Activated T-helper 2 cell treated with anti-CD3 and anti-CD28 coated beads, Interferon-gamma antibody, Interleukin-2, Interleukin-4, amounts not matched to agents 10 μg/mL and 5 μg/mL and 100 μg/mL, durations not matched to agents 14 hours and 24 hours and 36 hours (primary cell): ENCODE measurements at regions of chr6 and their contacts with region 1.

Region 1: GRCh38 chr6:45584127-45584526 is 206.4 kb upstream of the SUPT3H start:
- DNase-seq: no peak
- H3K4me3 Mint-ChIP-seq: no peak overlapping the region
- H3K27ac Mint-ChIP-seq: peak overlapping the region; percentile 91
- H3K4me1 Mint-ChIP-seq: peaks cover 48% of the 10 kb centered on the region
- H3K27me3 Mint-ChIP-seq: no peaks in the 10 kb centered on the region

Region 2: DNA sequence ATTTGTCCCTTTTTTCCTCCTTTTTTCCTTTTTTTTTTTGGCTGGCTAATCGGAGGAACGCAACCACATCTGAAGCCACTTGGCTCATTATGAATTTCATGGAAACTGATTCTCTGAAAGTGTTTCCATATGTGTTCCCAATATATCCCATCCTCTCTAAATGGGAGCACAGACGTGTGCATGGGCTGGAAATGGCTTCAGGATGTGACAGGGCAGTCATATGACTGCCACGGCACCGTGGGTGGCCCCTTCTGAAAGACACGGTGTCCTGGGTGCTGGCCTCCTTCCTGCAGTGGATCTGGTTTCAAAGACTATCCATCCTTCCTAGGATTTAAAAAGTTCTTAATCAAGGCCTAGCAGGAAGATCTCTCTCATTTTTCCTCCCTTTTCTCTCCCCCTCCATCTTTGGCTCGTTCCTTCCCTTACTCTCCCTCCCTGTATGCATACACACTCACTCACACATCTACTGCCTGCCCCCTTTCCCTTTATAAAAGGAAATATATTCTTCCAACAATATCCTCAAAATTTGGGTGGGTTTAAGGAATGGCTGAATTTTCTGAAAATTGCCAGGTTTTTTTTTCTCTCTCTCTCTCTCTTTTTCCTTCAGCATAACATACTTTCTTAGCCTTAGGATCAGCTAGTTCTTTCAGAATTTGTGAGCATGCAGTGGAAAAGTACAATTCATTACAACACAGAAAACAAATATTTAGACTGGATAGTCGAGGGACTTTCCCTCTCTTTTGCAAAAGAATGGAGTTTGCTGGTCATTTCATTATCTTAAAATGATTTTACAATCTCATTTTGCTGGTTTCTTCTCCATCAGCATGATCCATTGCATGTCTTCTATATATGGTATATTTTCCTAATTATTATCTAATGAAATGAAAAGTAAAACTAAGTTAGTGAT is 45.2 kb before region 1 on chr6:
- intact Hi-C with region 1: no loop called
- DNase-seq: no peak
- H3K4me3 Mint-ChIP-seq: no peak overlapping the region
- H3K27ac Mint-ChIP-seq: peak overlapping the region; percentile 18
- H3K4me1 Mint-ChIP-seq: peaks cover 69% of the 10 kb centered on the region
- H3K27me3 Mint-ChIP-seq: no peaks in the 10 kb centered on the region

Region 3: DNA sequence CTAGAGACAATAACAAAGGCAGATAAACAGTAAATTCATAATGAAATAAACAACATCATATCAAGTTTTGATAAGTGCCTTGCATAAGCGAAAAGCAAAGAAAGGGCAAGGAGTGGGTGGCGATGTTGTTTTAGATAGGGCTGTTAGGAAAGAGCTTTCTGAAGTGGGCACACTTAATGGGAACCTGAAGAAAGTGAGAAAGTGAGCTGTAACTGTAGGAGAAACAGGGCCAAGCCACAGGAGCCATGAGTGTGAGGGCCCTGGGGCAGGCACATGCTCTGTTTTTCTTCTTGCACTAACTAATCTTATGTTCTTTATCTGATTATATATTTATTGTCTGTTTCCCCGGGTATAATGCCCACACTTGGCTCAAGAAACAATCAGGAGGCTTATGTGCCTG is 13.0 kb before region 1 on chr6:
- intact Hi-C with region 1: loop called (anchors 2 kb)
- DNase-seq: no peak
- H3K4me3 Mint-ChIP-seq: no peak overlapping the region
- H3K27ac Mint-ChIP-seq: peak overlapping the region; percentile 87
- H3K4me1 Mint-ChIP-seq: peaks cover 36% of the 10 kb centered on the region
- H3K27me3 Mint-ChIP-seq: no peaks in the 10 kb centered on the region